IMR-90 (cell line): ENCODE measurements at regions of chr6 and their contacts with region 1.

Region 1: DNA sequence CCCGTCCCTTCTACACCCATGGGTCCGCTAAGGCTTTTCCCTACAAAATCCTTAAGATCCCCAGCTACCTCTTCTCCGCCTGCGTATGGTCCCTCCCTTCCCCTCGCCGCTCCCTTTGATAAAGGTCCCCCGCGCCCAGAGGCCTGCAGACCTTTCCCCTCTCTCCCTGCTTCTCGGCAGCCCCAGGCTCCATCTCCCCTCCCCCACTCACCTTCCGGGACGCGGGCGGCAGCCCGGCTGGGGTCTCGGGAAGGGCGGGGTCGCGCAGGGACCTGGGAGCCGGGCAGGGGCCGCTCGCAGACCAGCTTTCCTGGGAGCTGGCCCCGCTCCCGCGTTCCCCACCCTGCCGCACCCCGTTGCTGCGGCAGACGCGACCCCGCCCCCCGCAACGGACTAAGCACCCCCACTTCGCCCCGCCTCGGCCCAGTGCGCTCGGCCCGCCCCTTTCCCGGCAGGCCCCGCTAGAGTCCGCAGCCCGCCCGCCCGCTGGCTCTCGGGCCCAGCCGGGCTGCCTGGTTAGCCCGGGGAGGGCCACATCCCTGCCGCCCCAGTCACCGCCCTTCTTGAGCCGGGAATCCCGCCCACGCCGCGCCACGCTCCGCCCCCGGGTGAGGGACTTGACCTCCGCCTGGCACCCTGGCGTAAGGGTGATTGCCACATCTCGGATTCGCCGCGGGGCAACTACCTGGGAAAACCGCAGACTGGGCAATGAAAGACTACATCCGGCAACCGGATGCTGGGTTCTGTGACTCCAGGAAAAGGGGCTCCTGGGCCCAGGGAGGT is at the start of gene FLOT1:
- DNase-seq: peak; percentile 93
- ATAC-seq: peak; percentile 83
- H3K4me3 ChIP-seq: peak within 1 kb of the TSS; percentile 96
- H3K27ac ChIP-seq: peak within 1 kb of the TSS; percentile 98
- H3K4me1 ChIP-seq: peaks cover 18% of the 10 kb centered on the region
- H3K27me3 ChIP-seq: no peaks in the 10 kb centered on the region
- CTCF ChIP-seq: no peak
- POLR2A ChIP-seq: peak; percentile 60
- RAD21 ChIP-seq: 0 out of 2 replicates have a peak, but pooled peaks have one; percentile 9
- total RNA-seq, gene FLOT1: 96.2 and 104 TPM in 2 replicates

Region 2: GRCh38 chr6:29953001-29953441 is 789.5 kb before region 1 on chr6:
- CTCF ChIA-PET with region 1: no interaction called
- POLR2A ChIA-PET with region 1: no interaction called
- dilution Hi-C with region 1: no loop called
- in situ Hi-C with region 1: no loop called
- intact Hi-C with region 1: no loop called
- DNase-seq: peak; percentile 21
- ATAC-seq: no peak; the same call in 1 of the 2 replicates
- H3K4me3 ChIP-seq: no peak overlapping the region
- H3K27ac ChIP-seq: no peak overlapping the region
- H3K4me1 ChIP-seq: no peaks in the 10 kb centered on the region
- H3K27me3 ChIP-seq: no peaks in the 10 kb centered on the region
- CTCF ChIP-seq: no peak
- POLR2A ChIP-seq: no peak
- RAD21 ChIP-seq: no peak

Region 3: DNA sequence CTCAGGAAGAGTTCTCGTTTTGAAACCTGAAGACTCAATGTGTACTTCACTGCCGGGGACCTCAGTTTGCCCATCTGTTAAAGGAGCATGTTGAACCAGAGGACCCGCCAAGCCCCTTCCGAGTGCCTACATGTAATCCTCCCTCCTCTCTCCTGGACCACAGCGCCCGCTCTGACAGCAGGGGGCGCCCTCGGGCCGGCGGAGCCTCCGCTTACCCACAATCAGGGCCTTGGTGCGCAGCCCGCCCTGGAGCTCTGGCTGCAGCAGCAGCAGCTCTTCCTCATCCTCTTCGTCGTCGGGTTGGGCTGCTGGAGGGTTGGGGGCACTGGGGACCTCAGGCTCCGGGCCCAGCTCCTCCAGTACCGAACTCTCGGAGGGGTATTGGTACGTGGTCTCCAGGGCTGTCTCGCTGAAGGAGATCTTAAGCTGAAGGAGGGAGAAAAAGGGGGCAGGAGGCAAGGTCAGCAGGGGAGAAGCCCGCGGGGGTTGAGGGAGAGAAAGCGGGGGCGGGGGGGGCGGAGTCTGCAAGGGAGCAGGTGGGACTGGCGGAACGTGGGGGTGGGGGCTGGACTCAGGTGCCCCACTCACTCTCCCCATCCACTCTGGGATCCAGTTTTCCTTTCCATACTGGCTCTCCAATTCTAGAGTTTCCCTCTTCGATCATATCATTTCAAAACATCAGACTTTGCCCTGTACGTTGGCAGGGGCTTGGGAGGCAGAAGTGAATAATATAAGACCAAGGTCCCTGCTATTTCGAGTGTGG is 63.4 kb before region 1 on chr6:
- CTCF ChIA-PET with region 1: no interaction called
- POLR2A ChIA-PET with region 1: no interaction called
- dilution Hi-C with region 1: no loop called
- in situ Hi-C with region 1: no loop called
- intact Hi-C with region 1: no loop called
- DNase-seq: peak; percentile 73
- ATAC-seq: peak; percentile 36
- H3K4me3 ChIP-seq: no peak overlapping the region
- H3K27ac ChIP-seq: peak overlapping the region; percentile 49
- H3K4me1 ChIP-seq: peaks cover 14% of the 10 kb centered on the region
- H3K27me3 ChIP-seq: no peaks in the 10 kb centered on the region
- CTCF ChIP-seq: peak; percentile 93
- POLR2A ChIP-seq: no peak; the same call in 1 of the 2 replicates
- RAD21 ChIP-seq: peak; percentile 95

Region 4: DNA sequence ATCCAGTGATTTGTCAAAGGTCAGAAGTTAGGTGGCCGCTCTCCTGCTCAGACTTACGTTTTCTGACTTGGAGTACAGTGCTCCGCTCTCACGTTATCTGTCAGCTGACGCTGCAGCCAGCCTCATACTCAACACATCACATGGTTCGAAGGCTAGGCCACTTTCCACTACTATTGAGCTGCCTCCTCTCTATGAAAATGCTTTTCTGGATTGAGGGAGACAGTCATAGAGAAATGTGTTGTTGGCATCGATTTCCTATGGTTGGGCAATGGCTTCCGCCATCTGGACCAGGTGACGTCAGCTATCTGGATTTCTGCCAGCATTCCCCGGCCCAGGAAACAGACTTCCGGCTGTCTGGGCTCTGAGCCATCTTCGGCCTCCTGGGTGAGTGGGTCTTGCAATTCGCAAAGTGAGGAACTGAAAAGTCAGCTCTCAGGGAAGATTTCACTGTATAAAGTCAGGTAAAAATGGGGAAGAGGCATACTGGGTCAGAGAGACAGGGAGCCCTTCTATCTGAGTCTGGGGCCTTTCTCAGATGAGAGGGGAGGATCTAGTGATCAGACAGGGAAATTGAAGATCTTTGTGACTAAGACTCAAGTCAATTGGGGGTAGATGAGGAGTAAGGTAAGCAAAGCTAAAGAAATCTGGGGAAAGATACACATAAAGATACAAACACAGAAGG is 39.4 kb after region 1 on chr6:
- CTCF ChIA-PET with region 1: interaction called, 3 read pairs
- POLR2A ChIA-PET with region 1: interaction called, 11 read pairs
- dilution Hi-C with region 1: no loop called
- in situ Hi-C with region 1: loop called (anchors 5 kb)
- intact Hi-C with region 1: loop called (anchors 1 kb)
- DNase-seq: peak; percentile 100
- ATAC-seq: peak; percentile 81
- H3K4me3 ChIP-seq: no peak overlapping the region
- H3K27ac ChIP-seq: peak overlapping the region; percentile 84
- H3K4me1 ChIP-seq: peaks cover 31% of the 10 kb centered on the region
- H3K27me3 ChIP-seq: no peaks in the 10 kb centered on the region
- CTCF ChIP-seq: no peak
- POLR2A ChIP-seq: peak; percentile 38
- RAD21 ChIP-seq: peak; percentile 31; the same call in 1 of the 2 replicates

Region 5: GRCh38 chr6:30821862-30822782 is 79.6 kb after region 1 on chr6:
- CTCF ChIA-PET with region 1: interaction called, 6 read pairs
- POLR2A ChIA-PET with region 1: interaction called, 7 read pairs
- dilution Hi-C with region 1: no loop called
- in situ Hi-C with region 1: loop called (anchors 5 kb)
- intact Hi-C with region 1: loop called (anchors 1 kb)
- DNase-seq: no peak
- ATAC-seq: no peak
- H3K4me3 ChIP-seq: no peak overlapping the region
- H3K27ac ChIP-seq: no peak overlapping the region
- H3K4me1 ChIP-seq: peaks cover 22% of the 10 kb centered on the region
- H3K27me3 ChIP-seq: no peaks in the 10 kb centered on the region
- CTCF ChIP-seq: peak; percentile 61
- POLR2A ChIP-seq: no peak
- RAD21 ChIP-seq: peak; percentile 37

Region 6: GRCh38 chr6:30877419-30878371 is 135.2 kb after region 1 on chr6:
- CTCF ChIA-PET with region 1: no interaction called
- POLR2A ChIA-PET with region 1: interaction called, 3 read pairs
- dilution Hi-C with region 1: no loop called
- in situ Hi-C with region 1: loop called (anchors 5 kb)
- intact Hi-C with region 1: loop called (anchors 1 kb)
- DNase-seq: peak; percentile 90
- ATAC-seq: peak; percentile 88
- H3K4me3 ChIP-seq: peak overlapping the region; percentile 23; the same call in 1 of the 2 replicates
- H3K27ac ChIP-seq: peak overlapping the region; percentile 77
- H3K4me1 ChIP-seq: peaks cover 14% of the 10 kb centered on the region
- H3K27me3 ChIP-seq: no peaks in the 10 kb centered on the region
- CTCF ChIP-seq: peak; percentile 97
- POLR2A ChIP-seq: no peak
- RAD21 ChIP-seq: peak; percentile 94

Region 7: GRCh38 chr6:31007694-31008093 is 265.2 kb after region 1 on chr6:
- CTCF ChIA-PET with region 1: no interaction called
- POLR2A ChIA-PET with region 1: no interaction called
- dilution Hi-C with region 1: no loop called
- in situ Hi-C with region 1: no loop called
- intact Hi-C with region 1: no loop called
- DNase-seq: peak; percentile 93
- ATAC-seq: peak; percentile 92
- H3K4me3 ChIP-seq: no peak overlapping the region
- H3K27ac ChIP-seq: no peak overlapping the region
- H3K4me1 ChIP-seq: peaks cover 5% of the 10 kb centered on the region
- H3K27me3 ChIP-seq: no peaks in the 10 kb centered on the region; the same call in 1 of the 2 replicates
- CTCF ChIP-seq: no peak
- POLR2A ChIP-seq: no peak
- RAD21 ChIP-seq: no peak

Region 8: GRCh38 chr6:31068669-31069340 is 326.3 kb after region 1 on chr6:
- CTCF ChIA-PET with region 1: no interaction called
- POLR2A ChIA-PET with region 1: no interaction called
- dilution Hi-C with region 1: no loop called
- in situ Hi-C with region 1: no loop called
- intact Hi-C with region 1: loop called (anchors 5 kb)
- DNase-seq: peak; percentile 83
- ATAC-seq: peak; percentile 74
- H3K4me3 ChIP-seq: no peak overlapping the region
- H3K27ac ChIP-seq: no peak overlapping the region
- H3K4me1 ChIP-seq: peaks cover 3% of the 10 kb centered on the region
- H3K27me3 ChIP-seq: no peaks in the 10 kb centered on the region
- CTCF ChIP-seq: peak; percentile 86
- POLR2A ChIP-seq: no peak
- RAD21 ChIP-seq: peak; percentile 77

Region 9: GRCh38 chr6:31079656-31080261 is 337.3 kb after region 1 on chr6:
- CTCF ChIA-PET with region 1: no interaction called
- POLR2A ChIA-PET with region 1: no interaction called
- dilution Hi-C with region 1: no loop called
- in situ Hi-C with region 1: loop called (anchors 5 kb)
- intact Hi-C with region 1: loop called (anchors 5 kb)
- DNase-seq: peak; percentile 61
- ATAC-seq: peak; percentile 83
- H3K4me3 ChIP-seq: no peak overlapping the region
- H3K27ac ChIP-seq: no peak overlapping the region
- H3K4me1 ChIP-seq: peaks cover 8% of the 10 kb centered on the region
- H3K27me3 ChIP-seq: no peaks in the 10 kb centered on the region; the same call in 1 of the 2 replicates
- CTCF ChIP-seq: peak; percentile 87
- POLR2A ChIP-seq: no peak
- RAD21 ChIP-seq: peak; percentile 79